ENCODE measurements at regions of chr5 and their contacts with region 1.

Region 1: DNA sequence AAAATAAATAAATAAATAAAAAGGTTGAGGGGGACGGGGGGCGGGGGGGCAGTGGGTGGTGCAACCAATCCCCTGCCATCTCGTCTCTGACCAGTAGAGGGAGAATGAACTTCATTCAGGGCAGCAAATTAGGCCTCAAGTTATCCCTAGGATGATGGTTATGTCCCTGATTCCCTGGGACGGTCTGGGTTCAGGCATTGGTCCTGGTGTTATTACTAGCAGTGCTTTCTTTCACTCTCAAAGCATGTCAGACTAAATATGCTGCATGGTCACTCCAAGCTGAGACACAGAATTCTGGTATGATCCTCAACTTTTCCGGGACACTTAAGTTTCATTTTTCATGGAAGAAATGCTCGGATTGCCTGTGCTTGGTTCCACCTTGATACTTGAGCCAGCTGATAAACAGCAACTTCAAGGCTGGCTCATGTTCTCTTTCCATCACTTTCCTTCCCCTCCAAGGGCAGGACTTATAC is 59.4 kb downstream of the DAP start:
- DNase-seq: no peak
- H3K4me3 ChIP-seq: no peak overlapping the region
- CTCF ChIP-seq: peak; percentile 55

Region 2: DNA sequence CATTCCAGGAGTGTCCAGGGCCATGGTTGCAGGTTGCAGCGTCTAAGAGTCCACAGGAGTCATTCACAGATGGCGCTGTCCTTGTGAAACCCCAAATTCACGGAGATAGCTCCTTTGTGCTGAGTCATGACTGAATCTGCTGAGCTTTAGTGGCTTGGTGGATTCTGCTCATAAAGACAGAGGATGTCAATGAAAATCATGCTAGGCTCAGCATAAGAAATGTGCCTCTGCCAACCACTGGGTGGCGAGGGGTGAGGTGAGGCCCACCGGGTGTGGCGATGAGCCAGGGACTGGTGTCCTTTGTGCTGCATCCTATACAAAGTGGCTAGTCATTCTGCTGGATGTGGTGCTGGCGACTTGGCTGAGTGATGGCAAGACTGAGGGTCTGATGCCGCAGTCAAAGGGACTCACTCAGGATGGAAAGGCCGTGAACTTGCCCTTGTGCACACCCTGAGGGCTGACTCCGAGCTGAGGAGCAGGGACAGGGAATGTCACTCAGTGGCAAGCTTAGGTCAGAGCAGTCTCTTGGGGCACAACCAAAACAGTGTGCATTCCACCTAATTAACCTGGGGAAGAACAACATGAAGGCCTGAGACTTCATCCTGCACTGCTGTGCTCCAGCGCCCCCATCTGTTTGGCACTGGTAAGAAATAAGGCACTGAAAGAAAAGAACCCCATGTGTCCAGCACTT is 12.1 kb before region 1 on chr5:
- CTCF ChIA-PET with region 1: interaction called, 50 read pairs
- POLR2A ChIA-PET with region 1: interaction called, 5 read pairs
- DNase-seq: no peak
- H3K4me3 ChIP-seq: no peak overlapping the region
- CTCF ChIP-seq: peak; percentile 24

Region 3: DNA sequence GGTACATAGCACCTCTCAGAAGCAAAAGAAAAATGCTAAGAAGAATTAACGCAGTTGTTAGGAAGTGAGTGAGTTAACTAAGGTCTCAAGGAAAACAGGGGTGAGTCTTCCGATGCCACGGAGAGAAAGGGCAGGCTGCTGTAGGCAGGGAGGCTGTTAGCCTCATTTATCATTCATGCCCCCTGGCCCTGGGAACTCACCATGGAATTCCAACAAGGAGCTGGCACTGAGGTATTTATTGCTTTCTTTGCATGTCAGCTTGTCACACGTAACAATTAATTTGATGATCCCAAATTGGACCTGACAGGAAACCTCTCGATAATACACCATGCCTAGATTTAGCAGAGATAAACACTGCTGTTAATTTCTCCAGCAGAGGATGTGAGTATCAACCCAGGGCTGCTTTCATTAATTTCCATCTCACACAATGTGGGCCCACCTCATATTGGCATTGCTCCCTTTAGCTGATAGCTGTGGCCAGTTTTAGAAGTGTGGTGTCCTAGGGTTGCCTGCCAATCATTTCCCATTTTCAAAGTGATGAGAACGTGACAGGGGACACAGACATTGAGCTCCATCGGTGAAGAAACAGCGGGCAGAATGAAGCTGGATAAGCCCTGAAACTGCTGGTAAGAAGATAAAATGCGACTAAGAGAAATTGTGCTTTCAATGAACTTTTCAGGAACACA is 14.1 kb after region 1 on chr5:
- CTCF ChIA-PET with region 1: interaction called, 10 read pairs
- POLR2A ChIA-PET with region 1: no interaction called
- DNase-seq: no peak
- H3K4me3 ChIP-seq: no peak overlapping the region
- CTCF ChIP-seq: no peak

Region 4: DNA sequence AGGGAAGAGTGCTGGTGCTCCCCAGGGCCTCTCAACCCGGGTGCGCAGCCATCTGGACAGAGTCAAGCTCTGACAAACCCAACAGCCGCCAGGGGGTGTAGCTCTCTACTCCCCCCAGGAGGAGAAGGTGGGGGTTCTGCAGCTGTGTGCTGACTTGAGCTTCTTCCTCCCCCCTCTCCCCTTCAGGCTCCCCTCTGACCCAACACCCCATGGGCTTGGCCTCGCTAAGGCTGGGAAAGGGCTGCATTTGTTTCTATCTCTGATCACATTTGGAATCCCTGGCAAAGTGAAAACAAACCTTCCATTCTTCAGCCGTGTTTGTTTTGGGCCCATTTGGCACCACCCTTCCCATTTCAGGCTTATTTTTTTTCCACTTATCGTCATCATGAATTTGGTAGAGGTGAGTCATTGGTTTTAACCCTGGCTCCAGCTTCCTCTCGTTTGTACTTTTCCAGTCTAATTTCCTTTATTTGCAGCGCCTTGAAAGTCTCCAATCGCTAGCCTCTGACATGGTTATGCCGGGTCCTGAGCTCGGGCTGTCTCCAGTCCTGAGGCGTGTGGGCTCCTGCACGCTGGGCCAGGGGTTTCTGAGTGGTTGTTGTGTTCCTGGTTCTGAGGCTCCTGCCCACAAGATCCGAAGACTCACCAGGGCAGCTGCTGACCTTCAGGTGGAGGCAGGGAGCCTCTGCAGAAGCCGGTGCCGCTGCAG is 23.4 kb after region 1 on chr5:
- CTCF ChIA-PET with region 1: interaction called, 10 read pairs
- POLR2A ChIA-PET with region 1: interaction called, 6 read pairs
- DNase-seq: no peak
- H3K4me3 ChIP-seq: peak overlapping the region; percentile 18
- CTCF ChIP-seq: no peak

Region 5: GRCh38 chr5:10856683-10857337 is 155.2 kb after region 1 on chr5:
- CTCF ChIA-PET with region 1: interaction called, 13 read pairs
- POLR2A ChIA-PET with region 1: no interaction called
- DNase-seq: peak; percentile 52
- H3K4me3 ChIP-seq: peak overlapping the region; percentile 16
- CTCF ChIP-seq: peak; percentile 93

Region 6: DNA sequence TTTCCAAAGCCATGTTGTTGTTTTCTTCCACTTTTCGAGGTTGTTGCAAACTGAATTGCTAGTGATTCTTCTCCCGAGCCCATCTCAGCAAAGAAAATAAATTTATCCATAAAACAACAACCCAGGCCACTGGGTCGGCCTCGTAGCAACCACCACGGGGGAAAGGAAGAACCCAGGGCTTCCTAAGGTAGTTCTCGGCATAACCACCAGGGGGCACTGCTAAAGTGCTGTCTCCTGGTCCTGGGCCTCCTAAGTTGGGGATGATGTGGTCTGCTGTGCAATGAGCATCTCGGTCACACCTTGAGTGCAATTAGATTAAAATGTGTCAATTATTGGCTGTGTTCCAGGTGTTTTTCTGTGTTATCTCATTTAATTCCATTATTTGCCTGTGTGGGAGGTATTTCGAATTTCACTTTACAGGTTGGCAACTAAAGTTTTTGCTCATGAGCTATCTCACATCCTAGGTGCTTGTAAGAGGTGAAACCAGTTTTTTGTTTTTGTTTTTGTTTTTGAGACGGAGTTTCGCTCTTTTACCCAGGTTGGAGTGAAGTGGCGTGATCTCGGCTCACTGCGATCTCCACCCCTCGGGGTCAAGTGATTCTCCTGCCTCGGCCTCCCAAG is 162.3 kb after region 1 on chr5:
- CTCF ChIA-PET with region 1: interaction called, 13 read pairs
- POLR2A ChIA-PET with region 1: no interaction called
- DNase-seq: no peak
- H3K4me3 ChIP-seq: no peak overlapping the region
- CTCF ChIP-seq: peak; percentile 76

Measured in AG04449 (cell line).